ENCODE measurements at regions of chr13 and their contacts with region 1.

Region 1: GRCh38 chr13:52809310-52809769 is 39.1 kb downstream of the PCDH8 start:
- DNase-seq: peak; percentile 93
- H3K4me3 ChIP-seq: no peak overlapping the region; a peak in 1 of 4 replicates
- H3K27ac ChIP-seq: peak overlapping the region in 1 of 2 experiments; percentile 21; a peak in 1 of 4 replicates
- H3K4me1 ChIP-seq: peaks cover 6 to 7% of the 10 kb centered on the region in 2 experiments
- H3K27me3 ChIP-seq: no peaks in the 10 kb centered on the region; the same call in 1 of the 2 replicates
- CTCF ChIP-seq: peak; percentile 78
- EP300 ChIP-seq: peak in 1 of 2 experiments; percentile 59; a peak in 1 of 4 replicates
- RAD21 ChIP-seq: peak; percentile 93

Region 2: DNA sequence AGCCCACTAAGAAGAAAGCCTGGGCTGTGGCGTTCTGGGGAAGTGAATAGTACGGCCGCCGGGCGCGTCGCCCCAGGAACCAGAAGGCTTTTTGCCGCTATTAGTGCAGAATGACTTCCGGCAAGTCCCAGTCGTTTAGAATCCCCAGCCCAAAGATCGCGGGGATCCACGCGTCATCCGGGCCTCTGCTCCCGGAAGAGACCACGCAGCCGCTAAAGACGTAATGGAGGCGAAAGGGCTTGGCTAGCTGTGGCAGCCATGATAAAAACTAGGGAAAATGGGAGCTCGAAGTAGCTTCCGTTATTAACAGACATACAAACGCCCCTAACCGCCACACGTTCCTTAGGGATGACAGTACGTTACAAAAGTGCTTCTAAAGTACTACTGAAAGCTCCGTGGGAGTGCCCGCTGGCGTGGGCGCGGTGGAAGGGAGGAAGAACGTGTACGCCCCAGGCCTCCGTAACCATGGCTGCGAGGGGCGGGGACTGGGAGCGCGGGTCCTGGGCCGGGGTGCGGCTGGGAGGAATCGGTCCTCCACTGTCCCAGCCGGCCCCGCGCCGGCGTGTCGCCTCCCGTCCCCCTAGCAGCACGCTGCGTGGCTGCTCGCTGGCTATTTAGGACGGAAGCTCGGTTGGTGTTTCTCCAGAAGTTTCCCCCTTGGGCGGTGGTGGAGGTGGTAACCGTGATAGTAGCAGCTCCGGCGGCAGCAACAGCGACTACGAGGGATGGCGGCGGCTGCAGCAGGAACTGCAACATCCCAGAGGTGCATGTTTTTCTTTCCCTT is 157.0 kb before region 1 on chr13 and contains the start of gene SUGT1:
- CTCF ChIA-PET with region 1: interaction called, 15 read pairs
- POLR2A ChIA-PET with region 1: interaction called, 7 read pairs
- DNase-seq: peak; percentile 91
- H3K4me3 ChIP-seq: peak within 1 kb of the TSS; percentile 81 to 96
- H3K27ac ChIP-seq: peak within 1 kb of the TSS; percentile 100
- H3K4me1 ChIP-seq: peaks cover 0 to 6% of the 10 kb centered on the region in 2 experiments; a peak in 2 of 4 replicates
- H3K27me3 ChIP-seq: no peaks in the 10 kb centered on the region
- CTCF ChIP-seq: peak; percentile 68
- EP300 ChIP-seq: 0 out of 4 replicates have a peak, but pooled peaks of 1 of the 2 experiments have one; percentile 43
- RAD21 ChIP-seq: no peak
- polyA plus RNA-seq, gene SUGT1: 17.8 and 18.6 TPM in 2 replicates

Region 3: DNA sequence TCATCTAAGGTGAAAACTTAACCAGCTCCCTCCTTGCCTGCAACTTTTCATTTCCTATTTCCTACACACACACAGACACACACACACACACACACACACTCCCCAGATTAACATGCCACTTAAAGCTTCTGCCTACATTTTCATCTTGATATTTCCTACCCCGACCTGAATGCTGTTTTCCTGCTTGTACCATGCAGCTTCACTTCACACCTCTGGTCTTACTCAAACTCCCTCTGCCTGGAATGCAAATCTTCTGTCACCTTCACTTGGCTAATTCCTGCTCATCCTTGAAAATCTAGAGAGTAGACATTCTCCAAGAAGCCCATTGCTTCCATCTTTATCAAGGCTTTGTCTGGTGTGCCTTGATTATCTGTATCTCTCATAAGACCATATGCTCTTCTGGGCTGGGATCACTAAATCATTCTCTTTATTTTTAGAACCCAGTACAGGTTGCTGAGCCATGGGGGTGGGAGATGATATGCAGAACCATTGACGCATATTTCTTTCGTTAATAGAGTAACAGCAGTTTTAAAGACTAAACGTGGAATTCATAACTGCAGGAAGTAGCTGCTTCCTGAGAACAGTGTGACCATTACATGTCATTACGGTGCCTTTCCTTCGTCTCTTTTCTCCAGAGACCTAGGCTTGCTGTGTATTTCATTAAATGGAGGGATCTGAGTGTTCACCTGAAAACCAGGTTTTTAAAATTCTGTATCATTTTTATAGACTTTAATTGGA is 107.4 kb before region 1 on chr13:
- CTCF ChIA-PET with region 1: interaction called, 13 read pairs
- POLR2A ChIA-PET with region 1: no interaction called
- DNase-seq: no peak
- H3K4me3 ChIP-seq: no peak overlapping the region
- H3K27ac ChIP-seq: no peak overlapping the region
- H3K4me1 ChIP-seq: peaks cover 0 to 4% of the 10 kb centered on the region in 2 experiments; a peak in 1 of 4 replicates
- H3K27me3 ChIP-seq: no peaks in the 10 kb centered on the region
- CTCF ChIP-seq: no peak
- EP300 ChIP-seq: no peak
- RAD21 ChIP-seq: no peak

Region 4: DNA sequence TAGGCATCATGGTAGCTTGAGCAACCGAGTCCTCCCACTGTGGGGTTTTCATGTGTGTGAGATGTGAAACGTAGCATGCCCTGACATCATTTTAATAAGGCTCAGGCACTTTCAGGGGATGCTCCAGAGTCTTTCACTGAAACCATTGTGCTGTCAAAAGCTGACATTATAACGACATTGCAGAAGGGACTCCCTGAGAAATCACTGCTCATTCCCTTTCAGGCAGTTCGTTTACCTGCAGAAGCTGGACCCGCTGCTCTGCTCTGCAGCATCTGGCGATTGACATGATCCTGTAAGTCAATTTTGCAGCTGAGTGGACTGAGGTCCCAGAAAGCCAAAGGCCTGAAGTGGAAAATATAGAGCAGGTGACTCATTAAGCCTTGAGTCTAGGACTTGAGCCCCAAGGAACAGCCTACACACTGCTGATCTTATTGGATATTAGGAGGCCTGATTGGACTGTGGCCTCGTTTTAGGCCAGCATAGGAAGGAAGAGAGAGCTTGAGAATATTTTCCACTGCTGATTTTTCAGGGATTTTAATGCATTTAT is 15.8 kb before region 1 on chr13:
- CTCF ChIA-PET with region 1: interaction called, 23 read pairs
- POLR2A ChIA-PET with region 1: no interaction called
- DNase-seq: no peak
- H3K4me3 ChIP-seq: no peak overlapping the region
- H3K27ac ChIP-seq: no peak overlapping the region
- H3K4me1 ChIP-seq: peaks cover 0 to 2% of the 10 kb centered on the region in 2 experiments; a peak in 1 of 4 replicates
- H3K27me3 ChIP-seq: no peaks in the 10 kb centered on the region; the same call in 1 of the 2 replicates
- CTCF ChIP-seq: no peak
- EP300 ChIP-seq: no peak
- RAD21 ChIP-seq: no peak

Region 5: GRCh38 chr13:52842441-52842840 is 33.1 kb after region 1 on chr13:
- CTCF ChIA-PET with region 1: interaction called, 19 read pairs
- POLR2A ChIA-PET with region 1: no interaction called
- DNase-seq: peak; percentile 69
- H3K4me3 ChIP-seq: no peak overlapping the region
- H3K27ac ChIP-seq: no peak overlapping the region
- H3K4me1 ChIP-seq: peaks cover 0 to 14% of the 10 kb centered on the region in 2 experiments; a peak in 1 of 4 replicates
- H3K27me3 ChIP-seq: peaks cover 11% of the 10 kb centered on the region
- CTCF ChIP-seq: no peak
- EP300 ChIP-seq: peak in 1 of 2 experiments; percentile 57; a peak in 1 of 4 replicates
- RAD21 ChIP-seq: no peak

Measured in SK-N-SH (cell line).